HEK293T (cell line): ENCODE measurements at regions of chr6 and their contacts with region 1.

Region 1: GRCh38 chr6:44475779-44476434 is 88.4 kb downstream of the CDC5L start:
- DNase-seq: peak; percentile 88

Region 2: DNA sequence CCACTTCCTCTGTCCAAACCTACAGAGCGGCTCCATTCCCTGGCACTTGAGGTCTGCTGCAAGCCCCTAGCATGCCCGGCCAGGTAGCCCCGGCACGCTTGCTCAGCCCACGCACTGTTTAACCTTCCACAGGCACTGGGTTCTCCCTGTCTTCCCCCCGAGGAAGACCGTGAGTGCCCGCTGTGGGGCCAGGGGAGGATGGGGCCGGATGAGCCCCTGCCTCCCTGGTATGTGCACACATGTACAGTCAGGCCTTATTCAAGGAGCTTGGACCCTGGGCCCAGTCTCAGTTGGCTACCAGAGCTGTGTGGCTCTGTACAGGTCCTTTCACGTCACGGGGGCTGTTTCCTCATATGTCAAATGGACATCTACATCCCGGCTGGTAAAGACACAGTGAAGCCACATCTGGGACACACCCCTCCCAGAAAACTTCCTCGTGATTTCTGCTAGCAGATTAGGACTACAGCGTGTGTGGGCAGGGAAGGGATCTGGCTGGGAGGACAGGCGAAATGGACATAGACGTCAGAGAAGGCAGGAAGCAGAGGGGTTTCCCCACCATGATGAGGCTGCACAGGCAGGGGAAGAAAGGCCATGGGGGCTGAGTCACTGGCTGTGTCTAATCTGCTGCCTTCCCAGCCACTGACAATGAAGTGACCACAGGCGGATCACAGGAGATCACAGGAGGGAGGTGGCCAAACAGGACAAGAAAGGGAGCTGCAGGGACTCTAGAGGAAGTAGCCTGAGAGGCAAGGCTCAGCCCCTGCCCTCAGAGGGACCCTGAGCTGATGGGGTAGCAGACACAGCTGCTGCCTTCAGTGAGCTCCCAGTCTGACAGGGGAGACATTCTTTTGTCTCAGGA is 411.6 kb before region 1 on chr6:
- CTCF ChIA-PET with region 1: no interaction called
- POLR2A ChIA-PET with region 1: no interaction called
- DNase-seq: no peak

Region 3: GRCh38 chr6:44464527-44465310 is 11.2 kb before region 1 on chr6:
- CTCF ChIA-PET with region 1: interaction called, 19 read pairs
- POLR2A ChIA-PET with region 1: no interaction called
- DNase-seq: no peak

Region 4: DNA sequence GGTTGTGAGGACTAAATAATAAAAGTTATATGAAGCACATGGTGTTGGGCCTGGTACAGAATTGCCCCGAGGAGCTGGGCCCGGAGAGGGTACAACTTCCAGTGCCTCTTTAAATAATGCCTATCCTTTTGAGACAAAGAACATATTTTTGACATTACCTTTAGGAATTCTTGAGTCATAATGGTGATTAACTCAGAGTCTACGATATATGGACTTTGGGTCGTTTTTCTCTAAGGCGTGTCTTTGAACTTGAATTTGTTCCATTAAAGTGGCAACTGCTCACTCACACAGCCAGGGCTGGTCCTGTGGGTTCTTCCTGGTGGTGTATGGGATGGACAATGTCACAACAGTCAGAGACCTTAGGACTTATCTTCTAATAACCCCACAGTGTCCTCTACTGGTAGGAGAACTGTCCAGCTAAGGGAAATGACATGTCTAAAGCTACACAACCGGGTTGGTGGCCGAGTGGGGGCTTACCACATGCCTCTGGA is 18.1 kb after region 1 on chr6:
- CTCF ChIA-PET with region 1: interaction called, 10 read pairs
- POLR2A ChIA-PET with region 1: no interaction called
- DNase-seq: peak; percentile 22

Region 5: GRCh38 chr6:44593539-44593944 is 117.6 kb after region 1 on chr6:
- CTCF ChIA-PET with region 1: interaction called, 17 read pairs
- POLR2A ChIA-PET with region 1: no interaction called
- DNase-seq: peak; percentile 68

Region 6: GRCh38 chr6:44630125-44631028 is 154.5 kb after region 1 on chr6:
- CTCF ChIA-PET with region 1: interaction called, 36 read pairs
- POLR2A ChIA-PET with region 1: no interaction called
- DNase-seq: peak; percentile 83

Region 7: GRCh38 chr6:44645276-44645675 is 169.4 kb after region 1 on chr6:
- CTCF ChIA-PET with region 1: interaction called, 15 read pairs
- POLR2A ChIA-PET with region 1: no interaction called
- DNase-seq: peak; percentile 33

Region 8: GRCh38 chr6:44655412-44656342 is 179.8 kb after region 1 on chr6:
- CTCF ChIA-PET with region 1: interaction called, 22 read pairs
- POLR2A ChIA-PET with region 1: no interaction called
- DNase-seq: peak; percentile 76